Activated T-helper 2 cell treated with anti-CD3 and anti-CD28 coated beads, Interferon-gamma antibody, Interleukin-2, Interleukin-4, amounts not matched to agents 10 μg/mL and 5 μg/mL and 100 μg/mL, durations not matched to agents 14 hours and 24 hours and 36 hours (primary cell): ENCODE measurements at regions of chr2 and their contacts with region 1.

Region 1: DNA sequence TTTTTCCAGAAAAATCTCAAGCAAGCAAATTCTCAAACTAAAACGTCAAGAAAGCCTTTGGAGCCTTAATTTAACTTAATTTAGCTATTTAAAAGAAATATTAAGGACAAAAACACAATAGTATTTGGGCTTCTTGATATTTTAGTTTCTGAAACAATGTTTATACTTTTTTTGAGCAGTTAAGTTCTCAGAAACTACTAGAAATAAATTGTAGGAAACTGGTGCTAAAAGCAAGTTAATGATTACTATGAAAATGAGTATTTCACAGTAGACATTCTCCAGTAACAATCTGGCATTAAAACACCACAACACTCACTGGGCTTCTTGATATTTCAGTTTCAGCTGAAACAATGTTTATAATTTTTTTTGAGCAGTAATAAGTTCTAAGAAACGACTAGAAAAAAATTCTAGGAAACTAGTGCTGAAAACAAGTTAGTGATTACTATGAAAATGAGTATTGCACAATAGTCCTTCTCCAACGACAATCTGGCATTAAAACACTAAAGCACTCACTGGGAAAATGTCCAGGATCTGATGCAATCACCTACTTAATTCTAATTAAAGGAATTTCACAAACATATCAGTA is 45.1 kb downstream of the TRAK2 start:
- DNase-seq: no peak
- H3K4me3 Mint-ChIP-seq: no peak overlapping the region
- H3K27ac Mint-ChIP-seq: peak overlapping the region; percentile 20
- H3K4me1 Mint-ChIP-seq: peaks cover 32% of the 10 kb centered on the region
- H3K27me3 Mint-ChIP-seq: no peaks in the 10 kb centered on the region

Region 2: GRCh38 chr2:201532686-201533304 is 126.6 kb after region 1 on chr2:
- intact Hi-C with region 1: loop called (anchors 2 kb)
- DNase-seq: no peak
- H3K4me3 Mint-ChIP-seq: no peak overlapping the region
- H3K27ac Mint-ChIP-seq: peak overlapping the region; percentile 83
- H3K4me1 Mint-ChIP-seq: peaks cover 7% of the 10 kb centered on the region
- H3K27me3 Mint-ChIP-seq: peaks cover 2% of the 10 kb centered on the region